MCF 10A (cell line): ENCODE measurements at regions of chr7 and their contacts with region 1.

Region 1: GRCh38 chr7:86199881-86200614 is 443.7 kb upstream of the GRM3 start:
- DNase-seq: no peak
- H3K4me3 Mint-ChIP-seq: no peak overlapping the region
- H3K27ac Mint-ChIP-seq: no peak overlapping the region
- H3K4me1 Mint-ChIP-seq: no peaks in the 10 kb centered on the region
- H3K27me3 Mint-ChIP-seq: no peaks in the 10 kb centered on the region
- CTCF ChIP-seq: no peak

Region 2: DNA sequence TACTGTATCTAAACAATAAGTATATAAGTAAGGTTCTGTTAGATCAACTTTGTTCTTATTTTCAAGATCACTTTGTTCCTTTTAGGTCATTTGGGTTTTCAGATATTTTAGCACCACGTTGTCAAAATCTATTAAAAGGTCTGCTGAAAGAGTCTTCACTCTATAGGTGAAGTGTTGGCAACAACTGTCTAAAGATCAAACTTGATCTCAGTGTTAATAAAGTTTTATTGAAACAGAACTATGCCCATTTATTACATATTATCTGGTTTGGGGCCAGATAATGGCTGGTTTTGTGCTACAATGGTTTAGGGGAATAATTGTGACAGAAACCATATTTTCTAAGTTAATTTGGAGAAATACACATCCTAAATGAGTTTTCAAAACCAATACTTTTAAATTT is 35.2 kb before region 1 on chr7:
- CTCF ChIA-PET with region 1: interaction called, 3 read pairs
- POLR2A ChIA-PET with region 1: no interaction called
- intact Hi-C with region 1: loop called (anchors 2 kb)
- DNase-seq: no peak
- H3K4me3 Mint-ChIP-seq: no peak overlapping the region
- H3K27ac Mint-ChIP-seq: no peak overlapping the region
- H3K4me1 Mint-ChIP-seq: no peaks in the 10 kb centered on the region
- H3K27me3 Mint-ChIP-seq: peaks cover 29% of the 10 kb centered on the region
- CTCF ChIP-seq: no peak

Region 3: GRCh38 chr7:86226191-86226590 is 26.1 kb after region 1 on chr7:
- CTCF ChIA-PET with region 1: no interaction called
- POLR2A ChIA-PET with region 1: no interaction called
- intact Hi-C with region 1: no loop called
- DNase-seq: no peak
- H3K4me3 Mint-ChIP-seq: no peak overlapping the region
- H3K27ac Mint-ChIP-seq: no peak overlapping the region
- H3K4me1 Mint-ChIP-seq: no peaks in the 10 kb centered on the region
- H3K27me3 Mint-ChIP-seq: no peaks in the 10 kb centered on the region
- CTCF ChIP-seq: no peak

Region 4: DNA sequence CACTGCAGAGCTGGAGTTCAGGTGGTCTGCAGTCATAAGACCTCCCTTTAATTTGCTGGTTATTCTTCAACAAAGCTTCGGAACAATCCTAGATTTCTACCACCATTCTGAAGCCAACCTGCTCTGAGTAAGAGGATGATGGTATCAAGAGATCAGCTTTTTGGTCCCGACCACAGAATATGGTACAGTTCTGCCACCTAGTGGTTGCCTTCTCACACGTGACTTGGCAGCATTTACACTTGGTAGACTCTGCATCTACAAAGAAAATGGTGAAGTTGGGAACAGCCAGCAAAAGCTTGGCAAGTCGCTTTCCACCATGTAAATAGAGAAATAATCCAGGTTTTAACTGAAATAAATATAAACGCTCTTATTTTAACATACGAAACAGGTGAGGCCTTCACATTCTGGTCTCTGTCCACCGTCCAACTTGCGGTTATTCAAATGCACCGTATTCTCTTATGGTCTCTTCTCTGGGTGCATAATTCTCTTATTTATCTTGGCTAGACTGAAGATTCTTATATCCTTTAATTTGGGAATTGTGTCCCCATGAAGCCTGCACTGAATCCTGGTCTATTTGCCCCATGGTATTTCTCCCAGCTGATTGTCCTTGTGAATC is 269.7 kb after region 1 on chr7:
- CTCF ChIA-PET with region 1: no interaction called
- POLR2A ChIA-PET with region 1: no interaction called
- intact Hi-C with region 1: no loop called
- DNase-seq: peak; percentile 80
- H3K4me3 Mint-ChIP-seq: no peak overlapping the region
- H3K27ac Mint-ChIP-seq: no peak overlapping the region
- H3K4me1 Mint-ChIP-seq: no peaks in the 10 kb centered on the region
- H3K27me3 Mint-ChIP-seq: peaks cover 22% of the 10 kb centered on the region
- CTCF ChIP-seq: peak; percentile 62